Ovary (tissue), 10 donors: ENCODE measurements at regions of chr14 and their contacts with region 1.

Region 1: DNA sequence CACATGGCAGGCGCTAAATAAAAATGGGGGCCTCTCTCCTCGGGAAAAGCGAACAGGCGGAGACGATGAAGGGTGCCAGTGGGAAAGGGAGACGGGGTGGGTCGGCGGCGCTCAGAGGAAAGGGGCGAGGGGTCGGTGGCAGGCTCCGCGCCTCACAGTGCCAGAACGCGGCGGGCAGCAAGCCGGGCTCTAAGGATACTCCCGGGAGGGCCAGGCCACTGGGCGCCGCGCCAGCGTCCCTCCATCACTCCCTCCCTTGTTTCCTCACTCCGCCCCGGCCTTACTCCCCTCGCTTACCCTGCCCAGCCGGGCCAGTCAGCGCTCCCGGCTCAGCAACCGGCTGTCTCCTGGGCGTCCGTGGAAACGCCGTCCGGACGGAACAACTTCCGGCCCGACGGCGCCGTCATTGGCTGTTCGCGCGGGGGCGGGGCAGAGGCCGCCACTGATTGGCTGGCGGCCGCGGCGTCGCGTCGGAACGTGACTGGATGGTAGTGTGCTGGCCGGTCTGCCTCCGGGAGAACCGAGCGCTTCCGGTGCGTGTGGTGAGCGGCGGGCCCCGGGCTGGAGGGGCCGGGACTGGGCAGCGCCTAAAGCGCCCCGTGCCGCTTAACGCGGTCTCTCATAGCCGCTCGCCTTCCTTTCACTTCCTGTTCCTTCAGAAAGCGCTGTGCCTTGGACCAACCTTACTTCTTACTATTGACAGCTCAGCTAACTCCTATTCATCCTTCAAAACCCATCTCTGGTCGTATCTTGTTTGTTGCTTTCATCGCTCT is 53.0 kb downstream of the SLC25A47 start:
- DNase-seq: peak; percentile 94 to 96 (median 94)
- H3K4me3 ChIP-seq: peak within 1 kb of the TSS; percentile 72
- H3K27ac ChIP-seq: peak within 1 kb of the TSS; percentile 54 to 75
- H3K4me1 ChIP-seq: peaks cover 2% of the 10 kb centered on the region
- H3K27me3 ChIP-seq: no peaks in the 10 kb centered on the region
- CTCF ChIP-seq: peak in 1 of 3 donors; percentile 19
- EP300 ChIP-seq: no peak
- POLR2A ChIP-seq: peak; percentile 79

Region 2: GRCh38 chr14:100239840-100240724 is 136.1 kb before region 1 on chr14:
- intact Hi-C with region 1: loop called in 2 of 4 experiments (anchors 5 to 10 kb)
- DNase-seq: peak; percentile 78 to 89 (median 86)
- H3K4me3 ChIP-seq: peak overlapping the region; percentile 92
- H3K27ac ChIP-seq: peak overlapping the region; percentile 94 to 97
- H3K4me1 ChIP-seq: peaks cover 9% of the 10 kb centered on the region
- H3K27me3 ChIP-seq: no peaks in the 10 kb centered on the region
- CTCF ChIP-seq: peak; percentile 57 to 85 (median 84)
- EP300 ChIP-seq: no peak
- POLR2A ChIP-seq: peak; percentile 23

Region 3: DNA sequence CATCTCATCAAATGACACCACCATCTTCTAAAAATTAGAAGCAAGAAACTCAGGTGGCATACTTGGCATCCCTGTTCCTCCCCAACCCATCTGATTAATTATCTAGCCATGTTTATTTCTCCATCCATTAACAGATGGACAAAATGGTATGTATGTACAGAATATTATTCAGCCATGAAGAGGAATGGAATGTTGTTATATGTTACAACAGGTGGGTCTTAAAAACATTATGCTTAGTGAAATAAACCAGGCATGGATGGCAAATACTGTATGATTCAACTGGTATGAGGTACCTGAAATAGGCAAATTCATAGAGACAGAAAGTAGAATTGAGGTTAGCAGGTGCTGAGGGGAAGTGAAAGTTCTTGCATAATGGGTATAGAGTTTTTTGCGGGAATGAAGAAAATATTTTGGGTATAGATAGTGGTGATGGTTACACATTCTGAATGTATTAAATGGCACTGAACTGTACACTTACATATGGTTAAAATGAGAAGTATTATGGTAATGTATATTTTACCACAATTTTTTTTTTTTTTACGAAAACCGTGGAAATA is 119.7 kb before region 1 on chr14:
- intact Hi-C with region 1: no loop called
- DNase-seq: no peak
- H3K4me3 ChIP-seq: no peak overlapping the region
- H3K27ac ChIP-seq: no peak overlapping the region
- H3K4me1 ChIP-seq: peaks cover 6% of the 10 kb centered on the region
- H3K27me3 ChIP-seq: no peaks in the 10 kb centered on the region
- CTCF ChIP-seq: no peak
- EP300 ChIP-seq: no peak
- POLR2A ChIP-seq: no peak

Region 4: DNA sequence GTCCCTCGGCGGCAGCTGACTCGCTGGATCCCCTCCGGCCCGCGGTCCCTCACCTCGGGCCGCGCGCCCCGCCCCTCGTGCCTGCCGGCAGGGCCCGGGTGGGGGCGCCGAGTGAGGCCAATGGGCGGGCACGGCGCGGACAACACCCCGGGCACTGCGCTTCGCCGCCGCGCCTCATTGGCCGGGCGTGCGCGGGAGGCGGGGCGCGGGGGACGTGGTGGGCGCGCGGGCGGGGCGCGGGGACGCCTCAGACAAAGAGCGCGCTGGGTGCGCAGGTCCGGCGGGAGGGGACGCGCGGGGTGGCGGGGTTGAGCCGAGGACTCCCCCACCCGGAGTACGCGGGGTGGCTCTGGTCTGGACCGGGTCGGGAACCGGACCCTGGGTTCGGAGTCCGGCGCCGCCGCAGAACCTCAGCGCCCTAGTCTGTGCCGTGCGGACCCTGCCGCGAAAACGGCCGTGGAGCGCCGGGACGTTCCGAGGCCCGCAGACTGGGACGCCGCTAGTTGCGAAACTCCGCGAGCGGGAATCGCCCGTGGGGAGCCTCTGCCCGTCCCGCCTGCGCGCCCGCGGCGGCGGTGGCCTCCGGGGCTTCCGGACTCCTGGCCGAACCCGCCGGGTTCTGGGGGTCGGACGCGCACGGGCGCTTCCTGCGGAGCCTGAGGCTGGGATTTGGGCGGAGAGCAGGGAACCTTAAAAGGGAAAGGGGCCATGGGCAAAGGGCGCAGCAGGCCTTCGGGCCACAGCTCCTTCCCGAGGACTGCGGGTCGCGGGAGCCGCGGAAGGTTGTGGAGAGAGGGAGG is 69.5 kb before region 1 on chr14 and contains the start of gene SLC25A29:
- intact Hi-C with region 1: loop called in 2 of 4 experiments (anchors 5 kb)
- DNase-seq: peak; percentile 86 to 93 (median 91)
- H3K4me3 ChIP-seq: peak within 1 kb of the TSS; percentile 92
- H3K27ac ChIP-seq: peak within 1 kb of the TSS; percentile 82 to 83
- H3K4me1 ChIP-seq: peaks cover 4% of the 10 kb centered on the region
- H3K27me3 ChIP-seq: no peaks in the 10 kb centered on the region
- CTCF ChIP-seq: no peak
- EP300 ChIP-seq: no peak
- POLR2A ChIP-seq: peak; percentile 80
- total RNA-seq, gene SLC25A29: 50.2 to 177 (median 72.3) TPM

Region 5: GRCh38 chr14:100406505-100407131 is 30.5 kb after region 1 on chr14:
- intact Hi-C with region 1: no loop called
- DNase-seq: no peak
- H3K4me3 ChIP-seq: no peak overlapping the region
- H3K27ac ChIP-seq: no peak overlapping the region
- H3K4me1 ChIP-seq: no peaks in the 10 kb centered on the region
- H3K27me3 ChIP-seq: no peaks in the 10 kb centered on the region
- CTCF ChIP-seq: no peak
- EP300 ChIP-seq: no peak
- POLR2A ChIP-seq: no peak

Region 6: GRCh38 chr14:100617410-100618317 is 241.5 kb after region 1 on chr14:
- intact Hi-C with region 1: no loop called
- DNase-seq: peak in 2 of 5 donors; percentile 20 to 46
- H3K4me3 ChIP-seq: no peak overlapping the region
- H3K27ac ChIP-seq: no peak overlapping the region
- H3K4me1 ChIP-seq: no peaks in the 10 kb centered on the region
- H3K27me3 ChIP-seq: no peaks in the 10 kb centered on the region
- CTCF ChIP-seq: no peak
- EP300 ChIP-seq: no peak
- POLR2A ChIP-seq: no peak